Activated CD4-positive, alpha-beta T cell treated with anti-CD3 and anti-CD28 coated beads for 36 hours (primary cell): ENCODE measurements at regions of chr2 and their contacts with region 1.

Region 1: GRCh38 chr2:227406177-227407031 is 18.7 kb upstream of the SCYGR1 start:
- DNase-seq: peak; percentile 43
- ATAC-seq: no peak
- H3K4me3 Mint-ChIP-seq: no peak overlapping the region
- H3K27ac Mint-ChIP-seq: peak overlapping the region; percentile 14
- H3K4me1 Mint-ChIP-seq: peaks cover 52% of the 10 kb centered on the region
- H3K27me3 Mint-ChIP-seq: no peaks in the 10 kb centered on the region

Region 2: DNA sequence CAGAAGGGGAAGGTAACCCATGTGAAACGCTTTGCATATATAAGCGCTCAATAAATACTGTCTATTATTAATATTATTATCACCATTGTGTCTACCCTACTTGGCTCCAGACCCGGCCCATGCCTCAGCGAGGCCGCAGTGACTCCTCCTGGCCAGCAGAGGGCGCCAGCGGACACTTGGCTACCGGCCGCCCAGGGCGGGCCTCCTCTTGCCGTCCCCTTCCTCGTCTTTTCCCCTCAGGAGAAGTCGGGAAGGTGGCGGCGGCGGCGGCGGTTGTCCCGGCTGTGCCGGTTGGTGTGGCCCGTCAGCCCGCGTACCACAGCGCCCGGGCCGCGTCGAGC is 65.5 kb after region 1 on chr2 and contains the start of gene AGFG1:
- CTCF ChIA-PET with region 1: interaction called, 8 read pairs
- POLR2A ChIA-PET with region 1: no interaction called
- intact Hi-C with region 1: loop called in 1 of 2 experiments (anchors 2 kb)
- DNase-seq: peak; percentile 91
- ATAC-seq: peak; percentile 82
- H3K4me3 Mint-ChIP-seq: peak within 1 kb of the TSS; percentile 94
- H3K27ac Mint-ChIP-seq: peak within 1 kb of the TSS; percentile 87
- H3K4me1 Mint-ChIP-seq: peaks cover 48% of the 10 kb centered on the region
- H3K27me3 Mint-ChIP-seq: no peaks in the 10 kb centered on the region
- total RNA-seq, gene AGFG1: 158 to 214 TPM

Region 3: GRCh38 chr2:227566012-227566411 is 159.6 kb after region 1 on chr2:
- CTCF ChIA-PET with region 1: no interaction called
- POLR2A ChIA-PET with region 1: no interaction called
- intact Hi-C with region 1: loop called in 1 of 2 experiments (anchors 10 kb)
- DNase-seq: no peak
- ATAC-seq: no peak
- H3K4me3 Mint-ChIP-seq: no peak overlapping the region
- H3K27ac Mint-ChIP-seq: no peak overlapping the region
- H3K4me1 Mint-ChIP-seq: no peaks in the 10 kb centered on the region
- H3K27me3 Mint-ChIP-seq: no peaks in the 10 kb centered on the region

Region 4: DNA sequence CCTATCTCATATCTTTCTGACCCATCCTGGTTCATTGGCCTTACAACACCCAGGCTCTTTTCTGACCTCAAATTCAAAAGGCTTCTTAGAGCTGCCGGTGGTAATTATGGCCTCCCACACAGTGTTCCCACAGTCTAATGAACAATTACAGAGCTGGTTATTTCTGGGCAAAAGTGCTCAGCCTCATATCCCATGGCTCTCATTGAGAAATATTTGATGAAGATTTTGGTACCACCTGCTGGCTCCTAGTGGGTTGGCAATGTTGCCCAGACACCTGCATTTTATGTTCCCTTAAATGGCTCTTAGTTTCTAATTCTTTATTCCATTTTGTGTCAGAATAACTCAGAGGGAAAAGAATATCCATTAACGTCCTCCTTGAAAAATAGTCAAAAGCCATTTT is 172.2 kb after region 1 on chr2:
- CTCF ChIA-PET with region 1: no interaction called
- POLR2A ChIA-PET with region 1: no interaction called
- intact Hi-C with region 1: loop called in 1 of 2 experiments (anchors 5 kb)
- DNase-seq: no peak
- ATAC-seq: no peak
- H3K4me3 Mint-ChIP-seq: no peak overlapping the region
- H3K27ac Mint-ChIP-seq: no peak overlapping the region
- H3K4me1 Mint-ChIP-seq: no peaks in the 10 kb centered on the region
- H3K27me3 Mint-ChIP-seq: peaks cover 22% of the 10 kb centered on the region